Activated naive CD8-positive, alpha-beta T cell treated with anti-CD3 and anti-CD28 coated beads, Interleukin-2, amount 10 ng/mL, durations not matched to agents 7 days and 5 days (primary cell): ENCODE measurements at regions of chr14 and their contacts with region 1.

Region 1: DNA sequence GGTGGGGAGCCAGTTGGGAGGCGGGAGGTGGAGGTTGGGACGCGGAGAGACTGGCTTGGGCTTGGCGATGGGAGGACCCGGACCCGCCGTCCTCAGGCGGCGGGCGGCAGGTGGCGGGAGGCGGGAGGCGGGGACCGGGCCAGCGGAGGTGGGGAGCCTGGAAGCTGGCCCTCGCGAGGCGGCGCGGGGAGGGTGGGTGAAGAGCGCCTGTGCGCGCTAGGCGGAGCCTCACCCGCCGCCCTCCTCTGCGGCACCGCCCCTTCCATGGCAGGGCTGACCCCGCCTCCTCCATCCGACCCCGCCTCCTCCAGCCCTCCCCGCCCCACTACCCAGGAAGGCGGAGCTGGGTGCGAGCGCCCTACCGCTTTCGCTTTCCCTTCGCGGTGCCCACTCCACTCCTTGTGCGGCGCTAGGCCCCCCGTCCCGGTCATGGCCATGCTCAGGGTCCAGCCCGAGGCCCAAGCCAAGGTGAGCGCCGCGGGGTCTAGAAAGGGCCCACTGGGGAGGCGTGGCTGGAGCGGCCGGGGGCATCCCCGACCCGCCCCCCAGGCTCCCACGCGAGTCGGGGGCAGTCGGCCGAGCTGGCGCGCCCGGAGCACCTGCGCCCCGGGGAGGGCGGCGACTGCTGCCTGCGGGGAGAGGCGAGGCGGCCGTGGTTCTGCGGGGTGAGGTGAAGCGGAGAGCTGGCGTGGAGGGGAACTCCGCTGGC is at the start of gene PSME1:
- DNase-seq: peak; percentile 97
- ATAC-seq: peak; percentile 87
- H3K4me3 Mint-ChIP-seq: peak within 1 kb of the TSS; percentile 96
- H3K27ac Mint-ChIP-seq: peak within 1 kb of the TSS; percentile 94
- H3K4me1 Mint-ChIP-seq: peaks cover 51% of the 10 kb centered on the region
- H3K27me3 Mint-ChIP-seq: no peaks in the 10 kb centered on the region
- total RNA-seq, gene PSME1: 430 to 443 TPM

Region 2: DNA sequence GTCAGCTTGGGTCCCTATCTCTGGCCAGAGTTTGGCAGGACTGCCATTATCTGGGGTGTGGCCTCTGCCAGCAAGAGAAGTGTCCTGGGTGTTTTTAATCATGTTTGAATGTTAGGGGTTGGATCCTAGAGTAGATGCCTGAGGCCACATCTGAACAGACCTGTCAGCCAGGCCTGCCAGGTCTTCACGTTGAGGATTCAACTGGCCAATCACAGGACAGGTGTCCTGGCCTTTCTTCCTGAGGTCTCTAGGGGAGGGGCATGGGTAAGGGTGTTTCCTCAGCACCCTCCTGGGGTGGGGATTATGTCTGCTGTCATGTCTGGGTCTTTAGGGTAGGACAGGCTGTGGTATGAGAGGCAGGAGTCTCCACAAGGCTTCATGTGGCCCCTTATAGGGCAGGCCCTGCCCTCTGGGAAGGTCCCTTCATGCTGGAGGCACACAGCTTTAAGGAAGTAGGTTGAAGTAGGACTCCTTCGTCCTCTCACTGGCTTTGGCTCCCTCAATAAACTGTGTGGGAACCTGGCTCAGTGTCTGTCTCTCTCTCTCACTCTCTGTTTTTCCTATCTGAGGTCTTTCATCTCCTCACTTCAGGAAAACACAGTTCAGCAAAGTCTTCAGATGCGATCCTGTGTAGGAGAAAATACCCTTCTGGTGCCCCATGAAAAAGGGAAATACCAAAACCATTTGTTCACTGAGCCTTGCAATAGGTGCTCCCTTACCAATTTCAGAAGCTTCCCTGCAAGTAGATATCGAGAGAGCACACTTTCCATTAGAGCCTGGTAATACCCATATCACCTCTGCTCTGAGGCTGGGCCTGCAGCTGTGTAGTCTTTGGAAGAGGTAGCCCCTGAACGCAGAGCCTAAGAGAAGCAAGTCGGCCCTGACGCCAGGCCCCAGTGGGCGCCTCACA is 12.2 kb before region 1 on chr14:
- POLR2A ChIA-PET with region 1: interaction called, 176 read pairs
- DNase-seq: no peak
- ATAC-seq: no peak
- H3K4me3 Mint-ChIP-seq: no peak overlapping the region
- H3K27ac Mint-ChIP-seq: peak overlapping the region; percentile 19
- H3K4me1 Mint-ChIP-seq: peaks cover 5% of the 10 kb centered on the region
- H3K27me3 Mint-ChIP-seq: no peaks in the 10 kb centered on the region

Region 3: GRCh38 chr14:24146978-24147760 is 11.2 kb after region 1 on chr14 and contains the start of gene RNF31:
- POLR2A ChIA-PET with region 1: interaction called, 101 read pairs
- DNase-seq: peak; percentile 95
- ATAC-seq: peak; percentile 82
- H3K4me3 Mint-ChIP-seq: peak within 1 kb of the TSS; percentile 94
- H3K27ac Mint-ChIP-seq: peak within 1 kb of the TSS; percentile 96
- H3K4me1 Mint-ChIP-seq: peaks cover 54% of the 10 kb centered on the region
- H3K27me3 Mint-ChIP-seq: no peaks in the 10 kb centered on the region
- total RNA-seq, gene RNF31: 131 to 153 TPM

Region 4: GRCh38 chr14:24315807-24316603 is 180.0 kb after region 1 on chr14:
- POLR2A ChIA-PET with region 1: no interaction called
- DNase-seq: no peak
- ATAC-seq: no peak
- H3K4me3 Mint-ChIP-seq: no peak overlapping the region
- H3K27ac Mint-ChIP-seq: peak overlapping the region; percentile 17
- H3K4me1 Mint-ChIP-seq: peaks cover 46% of the 10 kb centered on the region
- H3K27me3 Mint-ChIP-seq: peaks cover 12% of the 10 kb centered on the region

Region 5: GRCh38 chr14:24442273-24443052 is 306.5 kb after region 1 on chr14 and contains the start of gene SDR39U1:
- POLR2A ChIA-PET with region 1: no interaction called
- DNase-seq: peak; percentile 88
- ATAC-seq: peak; percentile 95
- H3K4me3 Mint-ChIP-seq: peak within 1 kb of the TSS; percentile 90
- H3K27ac Mint-ChIP-seq: peak within 1 kb of the TSS; percentile 98
- H3K4me1 Mint-ChIP-seq: peaks cover 33% of the 10 kb centered on the region
- H3K27me3 Mint-ChIP-seq: no peaks in the 10 kb centered on the region
- total RNA-seq, gene SDR39U1: 75.7 to 79.5 TPM